Head of caudate nucleus (tissue), 42 donors: ENCODE measurements at regions of chr3 and their contacts with region 1.

Region 1: DNA sequence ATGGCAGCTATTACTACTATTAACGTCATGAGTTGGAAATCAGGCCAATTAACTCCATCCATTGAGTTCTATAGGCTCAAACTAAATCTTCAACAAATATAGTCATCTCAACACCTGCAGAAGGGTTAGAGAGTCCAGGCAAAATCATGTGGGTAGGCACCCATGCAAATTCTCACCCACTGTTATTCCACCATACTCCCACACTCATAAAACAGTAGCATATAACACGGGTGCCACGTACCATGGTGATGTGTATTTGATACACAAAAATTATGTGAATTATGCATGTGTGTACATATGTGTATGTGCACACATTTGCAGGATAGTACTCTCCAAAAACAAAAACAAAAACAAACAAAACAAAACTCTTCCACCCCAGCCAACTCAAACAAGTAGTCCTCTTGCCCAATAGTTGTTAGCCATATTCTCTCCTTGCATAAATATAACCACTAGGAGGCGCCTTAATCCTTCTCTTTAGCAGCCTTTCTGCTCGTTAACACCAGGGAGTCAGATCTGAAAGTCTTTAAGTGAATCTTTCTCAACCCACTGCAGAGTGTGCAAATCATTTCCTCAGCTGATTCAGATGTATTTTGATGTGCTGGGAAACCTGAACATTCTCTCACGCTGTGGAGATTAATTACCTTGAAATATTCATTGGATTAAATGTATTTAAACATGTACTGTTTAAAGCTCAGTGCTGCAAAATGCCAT is 38.0 kb upstream of the COPB2 start:
- DNase-seq: peak in 11 of 42 donors; percentile 18 to 81 (median 62)

Region 2: DNA sequence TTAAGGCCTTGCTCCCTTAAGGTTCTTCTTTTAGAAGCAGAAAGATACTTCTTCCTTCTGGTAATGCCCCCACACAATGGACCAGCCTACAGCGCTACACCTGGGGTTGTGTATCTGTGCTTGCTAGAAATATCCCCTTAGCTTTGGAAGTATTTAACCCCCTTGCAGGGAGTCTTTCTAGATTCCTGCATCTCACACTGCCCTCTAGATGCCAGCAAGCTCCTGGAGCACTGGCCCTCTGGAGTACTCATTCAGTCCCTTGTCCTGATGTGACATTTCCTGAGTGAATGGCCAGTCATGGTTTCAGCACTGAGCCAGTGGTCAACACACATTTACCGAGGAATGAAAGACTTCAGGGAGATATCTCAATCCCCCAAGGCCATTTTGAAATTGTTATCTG is 79.3 kb after region 1 on chr3:
- intact Hi-C with region 1: loop called (anchors 10 kb)
- DNase-seq: peak in 35 of 42 donors; percentile 9 to 80 (median 49)

Region 3: DNA sequence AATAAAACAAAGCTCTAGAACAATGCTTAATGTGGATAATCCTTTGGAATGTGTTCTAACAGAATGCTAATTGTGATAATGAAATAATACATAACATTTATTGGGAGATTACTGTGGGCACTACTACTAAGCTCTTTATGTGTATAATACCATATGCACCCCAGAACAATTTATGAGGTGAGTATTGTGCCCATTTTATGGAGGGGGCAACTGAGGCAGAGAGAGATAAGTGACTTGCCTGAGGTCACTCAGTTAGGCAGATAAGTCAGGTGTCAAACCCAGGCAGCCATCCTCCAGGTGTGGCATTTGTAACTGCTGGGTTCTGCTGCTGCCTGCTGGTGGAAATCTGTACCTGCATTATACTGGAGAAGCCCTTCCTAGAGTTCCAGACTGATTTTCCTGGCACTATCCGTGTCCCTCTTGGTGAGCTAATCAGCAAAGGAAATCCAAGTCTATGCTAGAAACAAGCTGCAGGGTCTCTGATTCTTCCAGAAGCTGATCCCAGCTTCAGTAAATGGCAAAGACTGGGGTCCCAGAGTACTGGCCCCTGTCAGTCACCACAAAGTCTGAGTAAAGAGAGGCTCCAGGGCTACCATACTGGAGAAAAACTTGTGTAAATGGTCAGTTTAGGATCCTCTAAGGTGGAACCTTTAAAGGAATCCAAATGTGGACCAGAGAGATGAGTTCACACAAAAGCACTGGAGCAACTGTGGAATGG is 134.7 kb after region 1 on chr3:
- intact Hi-C with region 1: loop called (anchors 5 kb)
- DNase-seq: peak in 26 of 42 donors; percentile 27 to 75 (median 47)

Region 4: DNA sequence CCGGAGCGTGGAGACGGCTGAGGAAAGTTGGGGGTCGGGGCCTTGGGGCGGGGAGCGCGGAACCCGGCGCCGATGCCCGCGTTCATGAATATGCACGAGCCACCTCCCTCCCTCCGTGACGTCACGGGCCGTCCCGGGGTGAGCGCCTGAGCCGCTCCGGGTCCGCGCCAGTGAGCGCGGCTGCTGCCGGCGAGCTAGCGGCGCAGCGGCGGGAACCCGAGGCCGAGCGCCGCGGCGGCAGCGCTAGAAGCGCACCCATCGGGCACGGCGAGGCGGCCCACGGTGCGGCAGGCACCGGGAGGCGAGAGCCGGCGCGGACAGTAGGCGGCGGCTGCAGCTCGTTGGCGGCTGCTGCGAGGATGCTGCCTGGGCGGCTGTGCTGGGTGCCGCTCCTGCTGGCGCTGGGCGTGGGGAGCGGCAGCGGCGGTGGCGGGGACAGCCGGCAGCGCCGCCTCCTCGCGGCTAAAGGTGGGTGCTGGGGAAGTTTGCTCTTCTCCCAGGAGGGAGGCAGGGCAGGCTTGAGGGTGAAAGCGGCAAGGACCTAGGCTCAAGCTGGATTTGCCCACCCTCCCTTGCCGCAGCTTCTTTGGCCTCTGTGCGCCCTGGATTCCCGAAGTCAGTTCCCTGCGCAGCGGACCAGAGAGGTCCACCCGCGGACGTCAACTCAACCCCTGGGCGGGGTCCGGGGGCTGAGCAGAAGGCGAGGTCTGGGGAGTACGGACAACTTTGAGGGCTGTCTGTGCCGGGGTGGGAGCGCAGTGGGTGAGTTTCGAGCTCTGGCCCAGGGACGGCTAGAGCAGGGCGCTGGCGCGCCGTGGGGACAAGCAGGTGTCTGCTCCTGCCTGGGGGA is 507.8 kb after region 1 on chr3 and contains the start of gene CLSTN2:
- intact Hi-C with region 1: loop called (anchors 10 kb)
- DNase-seq: peak; percentile 32 to 89 (median 79)